Dorsolateral prefrontal cortex (tissue), 120 donors: ENCODE measurements at regions of chr6 and their contacts with region 1.

Region 1: DNA sequence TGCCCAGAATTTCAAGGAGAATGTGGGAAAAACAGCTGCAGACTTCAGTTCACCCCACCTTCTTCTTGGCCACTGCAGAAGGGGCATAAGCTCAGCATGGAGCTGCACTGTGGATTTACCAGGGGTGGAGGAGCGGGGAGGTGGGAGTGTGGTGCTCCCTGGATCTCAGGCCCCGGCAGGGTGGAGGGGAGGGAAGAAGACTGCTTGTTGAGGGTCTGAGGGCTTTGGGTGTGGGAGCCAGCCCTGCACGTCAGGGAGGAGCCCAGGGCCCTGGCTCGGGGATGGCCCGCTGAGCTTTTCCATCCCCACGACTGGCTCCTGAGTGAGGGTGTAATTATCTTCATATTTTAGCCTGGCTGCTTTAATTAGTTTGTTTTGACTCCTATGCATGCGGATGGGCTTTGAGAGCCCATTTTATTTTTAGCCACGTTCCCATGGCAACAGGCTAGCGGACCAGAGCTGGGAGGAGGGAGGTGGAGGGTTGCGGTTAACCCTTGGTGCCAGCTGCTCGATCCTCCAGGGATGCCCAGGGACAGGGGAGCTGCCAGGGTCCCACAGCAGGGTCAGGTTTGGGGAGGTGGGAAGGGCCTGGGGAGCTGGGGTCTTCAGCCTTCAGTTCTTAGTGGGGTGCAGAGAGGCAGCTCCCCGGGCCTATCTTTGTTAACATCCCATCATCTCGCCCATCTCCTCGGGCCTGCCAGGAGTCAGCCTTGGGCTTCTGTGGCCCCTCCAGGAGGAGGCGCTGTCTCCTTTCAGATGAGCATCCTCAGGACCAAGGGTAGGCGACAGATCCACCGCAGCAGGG is 68.2 kb downstream of the RAB44 start:
- DNase-seq: peak; percentile 72 to 94 (median 84)
- H3K4me3 ChIP-seq: peak overlapping the region in 6 of 59 donors; percentile 13 to 33 (median 24)
- H3K27ac ChIP-seq: peak overlapping the region in 53 of 59 donors; percentile 2 to 84 (median 56)
- H3K27me3 ChIP-seq: no peaks in the 10 kb centered on the region
- CTCF ChIP-seq: peak; percentile 46 to 97 (median 88)

Region 2: DNA sequence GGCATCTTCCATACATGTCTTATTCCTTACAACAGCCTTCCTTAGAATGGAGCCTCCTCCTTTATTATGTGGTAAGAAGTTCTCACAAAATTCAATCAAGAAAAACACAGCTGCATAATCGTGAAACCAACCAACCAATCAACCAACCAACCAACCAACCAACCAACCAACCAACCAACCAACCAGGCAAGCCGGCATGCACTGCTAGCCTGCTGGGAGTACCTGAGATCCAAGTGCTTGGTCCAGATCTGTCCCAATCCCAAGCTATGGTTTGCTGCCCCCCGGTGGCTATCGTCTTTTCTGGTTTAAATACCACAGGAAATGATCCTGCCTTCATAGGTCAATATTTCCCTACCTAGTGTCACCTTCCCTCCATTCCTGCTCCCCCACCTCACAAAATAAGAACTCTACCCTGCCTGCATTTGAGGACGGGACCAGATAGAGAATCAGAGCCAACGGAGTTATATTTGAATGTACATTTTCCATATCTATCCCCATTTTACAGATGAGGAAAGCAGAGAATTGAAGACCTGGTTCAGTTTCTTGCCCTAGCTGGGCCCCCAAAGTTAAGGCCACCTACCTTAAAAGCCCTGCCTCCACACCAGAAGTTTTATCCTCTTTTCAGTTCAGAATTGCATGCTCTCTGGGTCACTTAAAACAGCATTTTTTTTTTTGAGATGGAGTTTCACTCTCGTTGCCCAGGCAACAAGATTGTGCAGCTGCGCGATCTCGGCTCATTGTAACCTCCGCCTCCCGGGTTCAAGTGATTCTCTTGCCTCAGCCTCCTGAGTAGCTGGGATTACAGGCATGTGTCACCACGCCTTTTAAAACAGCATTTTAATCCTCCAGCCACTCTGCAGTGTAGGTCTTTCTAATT is 41.0 kb before region 1 on chr6:
- intact Hi-C with region 1: no loop called
- DNase-seq: peak in 6 of 10 donors; percentile 29 to 68 (median 49)
- H3K4me3 ChIP-seq: no peak overlapping the region
- H3K27ac ChIP-seq: no peak overlapping the region
- H3K27me3 ChIP-seq: no peaks in the 10 kb centered on the region
- CTCF ChIP-seq: peak in 50 of 56 donors; percentile 14 to 64 (median 40)

Region 3: GRCh38 chr6:36839749-36840431 is 74.1 kb after region 1 on chr6:
- intact Hi-C with region 1: loop called in 1 of 2 experiments (anchors 5 kb)
- DNase-seq: peak in 5 of 10 donors; percentile 38 to 73 (median 55)
- H3K4me3 ChIP-seq: peak overlapping the region; percentile 31 to 73 (median 60)
- H3K27ac ChIP-seq: peak overlapping the region in 53 of 59 donors; percentile 11 to 92 (median 70)
- H3K27me3 ChIP-seq: peaks cover 0 to 4% (median 0%) of the 10 kb centered on the region in 45 donors
- CTCF ChIP-seq: peak in 21 of 56 donors; percentile 9 to 41 (median 17)

Region 4: DNA sequence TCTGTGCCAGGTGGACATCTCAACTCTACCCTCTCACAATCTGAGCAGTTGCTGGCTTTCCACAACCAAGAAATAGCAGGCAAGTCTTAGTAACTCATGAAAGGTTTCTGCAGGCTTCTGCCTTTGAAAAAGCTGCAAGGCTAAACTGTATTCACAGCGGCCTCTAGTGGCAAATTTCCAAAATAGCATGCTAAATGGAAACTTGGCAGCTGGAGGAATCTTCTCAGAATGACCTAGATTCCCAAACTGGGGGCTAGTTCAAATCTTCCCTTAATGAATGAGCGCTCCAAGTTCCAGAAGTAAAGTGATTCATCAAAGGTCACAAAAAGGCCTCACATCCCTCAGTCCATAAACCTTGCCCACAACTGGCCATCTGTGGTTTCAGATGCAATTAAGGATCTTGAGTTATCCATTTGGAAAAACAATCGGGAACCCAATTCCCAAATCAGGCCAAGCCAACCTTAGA is 85.4 kb after region 1 on chr6:
- intact Hi-C with region 1: loop called (anchors 2 to 5 kb)
- DNase-seq: peak in 3 of 10 donors; percentile 50 to 70 (median 69)
- H3K4me3 ChIP-seq: no peak overlapping the region
- H3K27ac ChIP-seq: peak overlapping the region in 29 of 59 donors; percentile 1 to 75 (median 36)
- H3K27me3 ChIP-seq: no peaks in the 10 kb centered on the region
- CTCF ChIP-seq: peak; percentile 63 to 87 (median 79)

Region 5: GRCh38 chr6:36985808-36986703 is 220.3 kb after region 1 on chr6 and contains the start of gene MTCH1:
- intact Hi-C with region 1: loop called in 1 of 2 experiments (anchors 10 kb)
- DNase-seq: peak; percentile 77 to 94 (median 90)
- H3K4me3 ChIP-seq: peak within 1 kb of the TSS; percentile 58 to 100 (median 99)
- H3K27ac ChIP-seq: peak within 1 kb of the TSS; percentile 88 to 100 (median 99)
- H3K27me3 ChIP-seq: no peaks in the 10 kb centered on the region
- CTCF ChIP-seq: peak in 26 of 56 donors; percentile 1 to 57 (median 20)
- total RNA-seq, gene MTCH1: 246 to 500 (median 376) TPM

Region 6: GRCh38 chr6:37207903-37208456 is 442.2 kb after region 1 on chr6:
- intact Hi-C with region 1: loop called in 1 of 2 experiments (anchors 5 kb)
- DNase-seq: peak; percentile 46 to 86 (median 78)
- H3K4me3 ChIP-seq: no peak overlapping the region
- H3K27ac ChIP-seq: no peak overlapping the region
- H3K27me3 ChIP-seq: no peaks in the 10 kb centered on the region
- CTCF ChIP-seq: peak; percentile 19 to 75 (median 62)